Dendritic cell treated with granulocyte-macrophage colony-stimulating factor and Interleukin-4, amounts not matched to agents 40 ng/mL and 50 ng/mL, for 4 days (primary cell): ENCODE measurements at regions of chr9 and their contacts with region 1.

Region 1: DNA sequence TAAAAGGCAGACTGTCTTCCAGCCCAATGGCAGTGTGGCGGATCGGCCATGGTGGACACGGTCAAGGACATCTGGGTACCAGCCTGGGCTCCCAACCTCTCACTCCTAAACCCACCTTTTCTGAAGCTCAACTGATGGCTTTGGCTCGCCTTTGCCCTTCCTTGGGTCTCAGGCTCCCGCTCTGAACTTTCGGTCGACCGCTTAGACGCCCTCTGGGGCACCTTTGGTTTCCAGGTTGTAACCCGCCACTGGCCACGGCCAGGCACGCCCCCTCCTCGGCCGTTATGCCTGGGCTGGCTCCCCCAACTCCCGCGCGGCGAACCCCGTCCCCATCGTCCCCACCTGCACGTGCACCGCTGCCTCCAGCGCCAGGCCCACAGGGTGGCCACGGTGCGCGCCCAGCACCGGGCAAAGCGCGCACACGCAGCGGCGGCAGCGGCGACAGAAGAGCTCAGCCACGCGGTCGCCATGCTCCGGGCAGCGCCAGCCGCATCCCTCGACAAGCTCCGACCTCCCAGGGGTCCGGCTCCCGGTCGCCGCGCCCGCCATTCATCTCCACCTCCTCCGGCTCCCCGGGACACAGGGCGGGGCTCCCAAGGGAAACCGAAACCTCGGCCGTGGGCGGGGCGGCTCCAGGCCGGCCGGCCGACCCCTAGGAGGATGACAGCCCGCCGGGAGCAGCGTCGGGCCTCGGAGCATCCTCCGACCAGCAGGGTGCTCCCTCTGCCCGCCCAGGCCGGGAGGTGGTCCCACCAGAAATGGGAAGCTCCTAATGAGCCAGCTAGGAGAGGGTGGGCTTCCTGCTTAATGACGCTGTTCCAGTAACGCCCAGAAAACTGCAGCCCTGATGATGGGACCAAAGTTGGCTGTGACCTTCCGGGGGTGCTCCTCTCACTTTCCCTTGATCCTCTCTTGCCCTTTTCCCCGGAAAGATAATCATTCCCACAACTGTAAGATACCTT is at the start of gene TRIM14:
- H3K4me3 Mint-ChIP-seq: peak within 1 kb of the TSS; percentile 83
- H3K27ac Mint-ChIP-seq: peak within 1 kb of the TSS; percentile 93
- H3K4me1 Mint-ChIP-seq: peaks cover 57% of the 10 kb centered on the region
- H3K27me3 Mint-ChIP-seq: no peaks in the 10 kb centered on the region

Region 2: DNA sequence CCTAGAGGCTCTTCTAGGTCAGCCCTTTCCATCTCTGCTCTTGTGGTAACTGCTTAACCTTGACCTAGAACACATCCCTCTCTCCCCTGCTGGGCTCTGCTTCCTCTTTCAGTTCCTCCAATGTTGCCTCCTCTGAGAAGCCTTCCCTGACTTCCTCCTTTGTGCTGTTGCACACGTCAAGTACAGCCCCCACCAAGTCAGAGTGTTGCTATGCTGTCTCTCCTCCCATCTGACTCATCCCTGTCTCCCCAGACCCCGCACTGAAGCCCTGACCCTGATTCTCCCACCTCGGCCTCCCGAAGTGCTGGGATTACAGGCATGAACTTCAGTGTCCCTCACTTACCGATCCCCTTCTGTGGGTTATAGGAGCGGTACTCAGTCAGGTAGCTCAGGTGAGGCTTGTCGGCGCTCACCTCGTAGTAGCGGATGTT is 10.5 kb after region 1 on chr9:
- intact Hi-C with region 1: loop called (anchors 1 kb)
- H3K4me3 Mint-ChIP-seq: no peak overlapping the region
- H3K27ac Mint-ChIP-seq: peak overlapping the region; percentile 81
- H3K4me1 Mint-ChIP-seq: peaks cover 51% of the 10 kb centered on the region
- H3K27me3 Mint-ChIP-seq: no peaks in the 10 kb centered on the region

Region 3: DNA sequence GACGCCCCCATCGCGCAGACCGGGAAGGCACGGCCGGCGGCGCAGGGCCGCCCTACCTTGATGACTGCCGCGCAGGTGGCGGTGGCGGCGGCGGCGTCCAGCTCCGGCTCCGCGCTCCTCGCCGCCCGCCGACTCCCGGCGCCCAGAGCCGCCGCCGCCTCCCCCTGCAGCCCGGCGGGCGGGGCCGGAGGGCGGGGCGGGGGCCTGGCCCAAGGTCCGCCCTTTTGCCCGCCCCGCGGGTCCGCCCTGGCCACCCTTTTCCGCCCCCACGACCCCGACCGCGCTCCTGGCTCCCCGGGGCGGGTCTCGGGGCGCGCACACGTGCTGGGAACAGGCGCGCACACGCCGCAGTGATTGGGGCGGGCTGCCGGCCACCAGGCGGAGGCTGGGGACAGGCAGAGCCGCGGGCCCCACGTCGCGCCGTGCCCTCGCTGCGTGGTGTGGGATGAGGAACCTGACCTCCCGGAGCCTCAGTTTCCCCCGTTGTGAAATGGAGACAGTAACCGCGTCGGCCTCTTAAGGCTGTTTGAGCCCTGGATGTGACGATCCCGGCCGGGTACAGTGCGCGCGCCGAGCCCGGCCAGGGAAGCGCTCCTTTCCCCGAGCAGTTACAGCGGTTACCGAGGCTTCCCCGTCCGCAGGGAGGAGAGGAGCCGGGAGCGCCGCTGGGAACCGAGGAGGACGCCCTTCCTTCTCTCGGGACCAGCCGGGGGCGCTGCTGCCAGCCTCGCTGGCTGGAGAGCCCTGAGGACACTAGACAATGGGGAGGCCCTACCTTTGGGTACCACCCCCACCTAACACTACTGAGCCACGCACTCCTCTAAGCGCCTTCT is 73.8 kb after region 1 on chr9 and contains the start of gene CORO2A:
- intact Hi-C with region 1: loop called (anchors 5 kb)
- H3K4me3 Mint-ChIP-seq: peak within 1 kb of the TSS; percentile 87
- H3K27ac Mint-ChIP-seq: peak within 1 kb of the TSS; percentile 83
- H3K4me1 Mint-ChIP-seq: peaks cover 37% of the 10 kb centered on the region
- H3K27me3 Mint-ChIP-seq: peaks cover 7% of the 10 kb centered on the region